Prostate gland (tissue), 2 donors: ENCODE measurements at regions of chr9 and their contacts with region 1.

Region 1: GRCh38 chr9:127586537-127586936 is 25.5 kb upstream of the STXBP1 start:
- DNase-seq: peak; percentile 88
- H3K4me3 ChIP-seq: no peak overlapping the region
- H3K27ac ChIP-seq: no peak overlapping the region
- H3K4me1 ChIP-seq: peaks cover 6% of the 10 kb centered on the region
- H3K27me3 ChIP-seq: no peaks in the 10 kb centered on the region
- CTCF ChIP-seq: peak; percentile 88 to 97 (median 92)
- POLR2A ChIP-seq: no peak

Region 2: DNA sequence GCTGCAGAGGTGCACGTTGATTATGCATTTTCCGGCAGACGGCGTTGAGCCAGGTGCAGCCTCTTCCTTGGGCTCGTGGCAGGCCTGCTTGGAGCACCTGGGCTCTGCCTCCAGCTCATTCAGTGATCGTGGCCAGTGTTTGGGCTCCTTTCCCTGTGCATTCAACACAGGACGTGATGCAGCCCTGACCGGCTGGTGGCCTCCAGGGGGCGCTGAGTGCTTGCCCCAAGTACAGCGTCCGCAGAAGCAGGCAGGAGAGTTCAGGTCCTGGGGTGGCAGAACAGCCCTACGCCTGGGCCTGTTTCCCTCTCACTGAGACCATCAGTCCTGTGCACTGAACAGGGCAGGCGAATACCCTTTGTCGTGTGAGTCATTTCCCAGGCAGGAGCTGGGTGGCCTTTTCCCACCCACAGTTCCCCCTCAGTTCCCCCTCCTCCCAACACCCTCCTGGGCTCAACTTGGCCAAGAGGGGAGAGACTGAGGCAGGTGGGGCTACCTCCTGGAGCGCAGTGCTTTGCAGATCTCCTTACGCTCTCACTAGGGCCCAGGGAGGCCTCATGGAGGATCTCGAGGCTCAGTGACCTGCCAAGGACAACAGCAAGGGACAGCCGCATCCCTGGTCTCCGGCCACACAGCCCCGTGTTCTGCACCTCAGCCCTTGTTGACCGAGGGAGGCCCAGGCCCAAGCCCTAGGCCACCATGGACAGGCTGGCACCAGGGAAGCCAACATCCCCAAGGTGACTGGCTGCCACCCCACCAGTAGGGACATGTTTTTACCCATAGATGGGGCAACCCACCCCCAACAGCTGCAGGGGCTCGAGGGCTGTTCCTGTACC is 82.4 kb before region 1 on chr9:
- intact Hi-C with region 1: loop called (anchors 1 kb)
- DNase-seq: peak; percentile 88
- H3K4me3 ChIP-seq: no peak overlapping the region
- H3K27ac ChIP-seq: peak overlapping the region; percentile 55 to 67
- H3K4me1 ChIP-seq: peaks cover 8% of the 10 kb centered on the region
- H3K27me3 ChIP-seq: no peaks in the 10 kb centered on the region
- CTCF ChIP-seq: peak; percentile 81 to 96 (median 90)
- POLR2A ChIP-seq: no peak

Region 3: DNA sequence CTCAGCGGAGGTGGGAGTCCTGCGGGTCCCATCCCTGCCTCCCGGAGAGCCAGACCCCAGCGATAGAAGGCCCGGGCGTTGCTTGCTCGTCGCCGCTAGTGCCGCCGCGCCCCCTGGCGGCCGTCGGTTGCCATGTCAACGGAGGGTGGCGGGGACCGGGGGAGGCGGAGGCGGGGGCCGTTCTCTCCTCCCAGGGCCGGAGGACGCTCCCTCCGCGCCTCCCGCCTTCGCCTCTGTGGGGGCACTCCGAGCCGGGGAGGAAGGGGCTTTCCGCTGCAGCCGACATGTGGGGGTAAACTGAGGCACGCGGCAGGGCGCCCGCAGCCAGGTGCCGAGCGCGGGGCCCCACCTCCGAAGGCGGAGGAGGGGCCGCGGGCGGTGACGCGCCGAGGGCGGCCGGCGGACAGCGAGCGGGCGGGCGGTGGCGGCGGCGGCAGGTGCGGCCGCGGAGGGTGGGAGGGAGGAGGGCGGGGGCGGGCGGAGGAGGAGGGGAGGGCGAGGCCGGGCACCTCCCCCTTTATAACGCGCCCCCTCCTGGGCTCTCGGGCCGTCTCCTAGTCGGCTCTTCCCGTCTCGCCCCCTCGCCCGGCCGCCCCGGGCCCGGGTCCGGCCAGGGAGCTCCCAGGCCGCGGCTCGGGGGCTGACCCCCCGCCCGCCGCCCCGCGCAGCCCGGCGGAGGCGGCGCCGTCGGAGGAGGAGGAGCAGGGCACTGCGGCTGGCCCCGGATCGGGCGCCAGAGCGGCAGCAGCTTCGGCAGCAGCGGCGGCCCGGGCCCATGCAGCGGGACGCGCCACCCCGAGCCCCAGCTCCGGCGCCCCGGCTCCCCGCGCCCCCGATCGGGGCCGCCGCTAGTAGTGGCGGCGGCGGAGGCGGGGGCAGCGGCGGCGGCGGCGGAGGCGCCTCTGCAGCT is 198.7 kb after region 1 on chr9:
- intact Hi-C with region 1: loop called (anchors 5 kb)
- DNase-seq: peak; percentile 82
- H3K4me3 ChIP-seq: peak overlapping the region; percentile 95 to 96
- H3K27ac ChIP-seq: peak overlapping the region; percentile 93 to 96
- H3K4me1 ChIP-seq: peaks cover 8% of the 10 kb centered on the region
- H3K27me3 ChIP-seq: no peaks in the 10 kb centered on the region
- CTCF ChIP-seq: peak; percentile 92 to 99 (median 96)
- POLR2A ChIP-seq: no peak

Region 4: GRCh38 chr9:127796225-127796813 is 209.8 kb after region 1 on chr9:
- intact Hi-C with region 1: no loop called
- DNase-seq: no peak
- H3K4me3 ChIP-seq: no peak overlapping the region
- H3K27ac ChIP-seq: peak overlapping the region in 1 of 2 donors; percentile 36
- H3K4me1 ChIP-seq: peaks cover 14% of the 10 kb centered on the region
- H3K27me3 ChIP-seq: no peaks in the 10 kb centered on the region
- CTCF ChIP-seq: no peak
- POLR2A ChIP-seq: no peak

Region 5: DNA sequence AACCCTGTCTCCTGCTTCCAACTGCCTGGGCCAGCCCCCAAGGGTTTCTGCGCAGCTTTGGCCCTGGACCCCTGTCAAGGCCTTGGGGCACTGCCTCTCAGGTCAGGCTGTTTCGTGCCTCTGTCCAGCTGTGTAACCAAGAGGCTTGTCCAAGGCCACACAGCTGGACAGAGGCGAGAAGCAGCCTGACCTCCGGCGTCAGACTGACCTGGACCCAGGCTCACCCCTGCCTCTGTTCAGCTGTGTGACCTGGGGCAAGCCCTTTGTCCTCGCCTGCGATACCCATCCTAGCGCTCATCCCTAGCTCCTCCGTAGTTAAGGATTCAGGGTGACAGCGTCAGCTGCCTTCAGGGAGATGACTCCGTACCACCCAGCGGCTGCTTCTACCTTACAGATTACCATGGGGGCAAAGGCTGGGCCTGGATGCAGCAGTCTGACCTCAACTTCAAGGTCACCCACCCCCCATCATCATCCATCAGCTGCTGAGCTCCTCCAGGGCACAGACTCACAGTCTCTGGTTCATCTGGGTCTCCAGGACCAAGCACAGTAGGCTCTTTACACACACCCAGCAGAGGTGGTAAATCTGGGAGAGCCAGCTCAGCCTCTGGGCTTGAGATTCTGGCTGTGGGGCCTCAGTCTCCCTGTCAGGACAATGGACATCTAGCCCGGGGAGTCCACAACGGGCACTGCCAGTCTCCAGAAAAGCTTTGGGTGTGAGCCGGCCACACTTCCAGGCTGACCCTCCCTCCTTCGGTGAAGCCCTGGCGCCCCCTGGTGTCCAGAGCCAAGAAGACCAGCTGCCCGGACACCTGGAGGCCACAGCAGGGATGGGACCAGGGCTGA is 283.0 kb after region 1 on chr9:
- intact Hi-C with region 1: loop called (anchors 5 kb)
- DNase-seq: peak; percentile 67
- H3K4me3 ChIP-seq: no peak overlapping the region
- H3K27ac ChIP-seq: no peak overlapping the region
- H3K4me1 ChIP-seq: peaks cover 8% of the 10 kb centered on the region
- H3K27me3 ChIP-seq: no peaks in the 10 kb centered on the region
- CTCF ChIP-seq: peak; percentile 51 to 91 (median 78)
- POLR2A ChIP-seq: no peak